Sigmoid colon (tissue), 7 donors: ENCODE measurements at regions of chr11 and their contacts with region 1.

Region 1: DNA sequence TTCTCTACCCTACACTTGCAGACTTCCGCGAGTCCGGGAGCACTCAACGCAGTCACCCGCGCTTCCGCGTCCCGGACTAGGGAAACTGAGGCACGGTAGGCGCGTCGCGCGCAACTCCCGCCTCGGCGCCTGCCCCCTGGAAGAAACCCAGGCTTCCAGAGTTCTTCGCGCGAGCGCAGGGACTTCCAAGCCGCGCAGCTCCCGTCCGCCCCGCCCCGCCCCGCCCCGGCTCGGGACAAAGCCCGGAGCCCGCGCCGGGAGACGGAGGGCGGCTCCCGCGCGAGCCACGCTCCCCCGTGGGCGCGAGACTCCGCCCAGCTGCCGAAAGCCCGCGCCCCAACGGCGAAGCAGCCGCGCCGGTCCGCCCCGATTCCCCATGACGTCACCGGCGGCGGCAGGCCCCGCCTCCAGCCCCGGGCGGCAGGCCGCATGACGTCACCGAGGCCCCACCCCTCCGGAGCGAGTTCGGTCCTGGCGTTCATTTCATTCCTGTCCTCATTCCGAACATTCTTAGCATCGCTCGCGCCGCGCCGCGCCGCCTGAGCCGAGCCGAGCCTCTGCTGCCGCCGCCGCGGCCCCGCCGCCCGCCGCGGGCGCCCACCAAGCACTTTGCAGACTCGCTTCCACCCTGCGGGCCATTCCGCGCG is at the start of gene TEAD1:
- DNase-seq: peak; percentile 98
- H3K4me3 ChIP-seq: peak within 1 kb of the TSS; percentile 62 to 92 (median 87)
- H3K27ac ChIP-seq: peak within 1 kb of the TSS; percentile 98 to 99 (median 99)
- H3K4me1 ChIP-seq: peaks cover 0 to 39% (median 15%) of the 10 kb centered on the region in 4 donors
- H3K27me3 ChIP-seq: no peaks in the 10 kb centered on the region
- CTCF ChIP-seq: no peak
- EP300 ChIP-seq: peak in 1 of 4 donors; percentile 61
- POLR2A ChIP-seq: peak; percentile 67 to 77
- total RNA-seq, gene TEAD1: 155 to 200 (median 186) TPM

Region 2: DNA sequence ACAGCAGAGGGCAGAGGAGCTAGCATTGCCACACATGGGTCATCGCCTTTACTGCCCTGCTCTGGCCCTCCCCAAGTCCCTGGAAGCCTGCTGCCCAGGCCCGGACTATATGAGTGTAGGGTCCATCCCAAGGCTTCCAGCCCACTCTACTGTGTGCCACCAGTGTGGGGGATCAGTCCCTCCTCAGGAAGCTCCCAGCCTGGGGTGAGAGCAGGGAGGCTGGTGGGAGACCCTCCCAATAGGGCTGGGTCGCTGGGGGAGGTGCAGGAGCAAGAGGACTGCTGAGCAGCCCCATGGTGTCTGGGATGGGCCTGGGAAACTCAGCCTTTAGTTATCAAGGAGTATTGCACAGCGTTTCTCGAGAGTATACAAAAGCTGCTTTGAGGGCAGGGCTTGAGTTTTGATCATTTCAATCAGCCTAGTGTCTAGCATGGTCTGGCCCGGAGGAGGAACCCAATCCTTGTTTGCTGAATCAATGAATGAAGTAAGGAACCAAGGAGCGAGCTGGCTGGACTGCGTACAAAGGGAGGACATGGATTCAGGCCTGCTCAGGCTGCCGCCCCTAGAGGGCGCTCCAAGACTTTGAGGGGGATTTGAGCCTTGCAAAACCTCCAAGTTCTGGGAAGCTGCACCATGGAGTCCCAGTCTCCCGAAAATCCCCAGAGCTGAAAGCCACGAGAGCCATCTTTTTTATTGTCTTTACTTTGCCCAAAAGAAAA is 385.7 kb before region 1 on chr11:
- intact Hi-C with region 1: loop called (anchors 2 kb)
- DNase-seq: peak; percentile 94
- H3K4me3 ChIP-seq: no peak overlapping the region
- H3K27ac ChIP-seq: peak overlapping the region; percentile 88 to 99 (median 92)
- H3K4me1 ChIP-seq: peaks cover 0 to 45% (median 39%) of the 10 kb centered on the region in 4 donors
- H3K27me3 ChIP-seq: no peaks in the 10 kb centered on the region
- CTCF ChIP-seq: peak; percentile 77 to 91 (median 84)
- EP300 ChIP-seq: no peak
- POLR2A ChIP-seq: no peak

Region 3: DNA sequence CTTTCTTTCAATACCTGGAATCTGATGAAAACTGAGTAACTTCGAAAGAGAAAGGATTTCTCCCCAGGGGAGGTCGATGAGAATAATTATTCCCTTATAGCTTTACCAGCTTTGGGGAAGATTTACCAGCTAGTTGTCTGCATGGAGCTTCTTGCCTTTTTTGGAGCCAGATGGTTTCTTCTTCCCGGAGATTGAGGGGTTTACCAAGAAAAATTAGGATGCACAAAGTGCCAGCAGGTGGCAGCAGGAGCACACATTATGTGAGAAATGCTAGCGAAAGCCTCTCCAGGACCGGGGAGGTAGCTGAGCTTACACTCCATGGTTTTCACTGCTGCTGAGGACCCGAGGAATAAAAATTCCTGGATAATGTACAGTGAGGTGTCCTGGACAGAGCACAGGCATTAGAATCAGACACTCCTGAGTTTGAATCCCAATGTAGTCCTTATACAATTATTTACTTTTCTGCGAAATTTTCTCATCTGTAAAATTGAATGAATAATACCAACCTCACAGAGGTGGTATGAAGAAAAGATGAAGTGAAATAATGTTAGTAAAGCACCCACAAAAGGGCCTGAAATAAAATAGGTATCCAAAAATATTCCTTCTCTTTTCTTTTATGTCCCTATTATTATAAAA is 342.7 kb before region 1 on chr11:
- intact Hi-C with region 1: loop called (anchors 2 kb)
- DNase-seq: peak; percentile 93
- H3K4me3 ChIP-seq: no peak overlapping the region
- H3K27ac ChIP-seq: peak overlapping the region; percentile 25 to 91 (median 84)
- H3K4me1 ChIP-seq: peaks cover 2 to 41% (median 34%) of the 10 kb centered on the region in 4 donors
- H3K27me3 ChIP-seq: no peaks in the 10 kb centered on the region
- CTCF ChIP-seq: peak; percentile 69 to 85 (median 76)
- EP300 ChIP-seq: no peak
- POLR2A ChIP-seq: no peak

Region 4: GRCh38 chr11:12411806-12412727 is 262.0 kb before region 1 on chr11:
- intact Hi-C with region 1: loop called (anchors 1 kb)
- DNase-seq: peak; percentile 95
- H3K4me3 ChIP-seq: no peak overlapping the region
- H3K27ac ChIP-seq: peak overlapping the region; percentile 97 to 99 (median 98)
- H3K4me1 ChIP-seq: peaks cover 0 to 100% (median 92%) of the 10 kb centered on the region in 4 donors
- H3K27me3 ChIP-seq: no peaks in the 10 kb centered on the region
- CTCF ChIP-seq: peak in 3 of 4 experiments; percentile 75 to 89 (median 82)
- EP300 ChIP-seq: peak; percentile 89 to 98 (median 92)
- POLR2A ChIP-seq: no peak

Region 5: DNA sequence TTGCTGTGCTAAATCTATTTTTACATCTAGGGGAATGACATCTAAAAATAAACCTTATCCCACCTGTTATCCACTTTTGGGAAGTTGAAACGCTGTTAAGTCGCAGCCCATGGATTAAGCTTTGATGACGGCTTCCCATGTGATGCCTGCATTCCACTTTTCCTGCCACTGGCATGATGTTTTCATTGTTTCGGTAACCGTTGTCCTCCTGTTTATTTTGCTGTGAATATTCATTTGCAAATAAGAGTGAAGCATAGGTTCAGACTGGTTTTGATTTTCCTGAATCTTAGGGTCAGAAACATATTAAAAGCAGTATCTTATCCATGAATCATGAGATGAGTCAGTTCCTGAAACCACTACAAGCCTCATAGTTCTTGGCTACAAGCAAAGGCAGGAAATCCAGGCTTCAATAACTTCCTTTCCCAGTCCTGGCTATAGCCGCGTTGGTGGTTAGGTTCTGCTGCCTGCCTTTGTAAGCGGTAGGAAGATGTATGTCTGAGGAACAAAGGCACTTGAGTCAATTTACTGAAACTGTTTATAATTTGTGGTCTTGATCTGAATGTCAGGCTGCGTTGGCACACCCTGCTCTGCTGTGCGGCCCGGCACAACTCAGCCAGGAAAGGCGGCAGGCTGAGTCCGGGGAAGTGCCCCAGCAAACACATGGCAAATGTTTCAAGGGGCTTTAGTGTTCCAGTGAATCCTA is 19.6 kb after region 1 on chr11:
- intact Hi-C with region 1: loop called (anchors 2 kb)
- DNase-seq: peak; percentile 84
- H3K4me3 ChIP-seq: peak overlapping the region in 3 of 4 donors; percentile 11 to 26 (median 19)
- H3K27ac ChIP-seq: peak overlapping the region; percentile 82 to 93 (median 91)
- H3K4me1 ChIP-seq: peaks cover 0 to 86% (median 83%) of the 10 kb centered on the region in 4 donors
- H3K27me3 ChIP-seq: no peaks in the 10 kb centered on the region
- CTCF ChIP-seq: no peak
- EP300 ChIP-seq: peak in 3 of 4 donors; percentile 9 to 25 (median 16)
- POLR2A ChIP-seq: no peak

Region 6: GRCh38 chr11:12784987-12785386 is 110.9 kb after region 1 on chr11:
- intact Hi-C with region 1: no loop called
- DNase-seq: no peak
- H3K4me3 ChIP-seq: no peak overlapping the region
- H3K27ac ChIP-seq: no peak overlapping the region
- H3K4me1 ChIP-seq: peaks cover 0 to 21% (median 10%) of the 10 kb centered on the region in 4 donors
- H3K27me3 ChIP-seq: no peaks in the 10 kb centered on the region
- CTCF ChIP-seq: no peak
- EP300 ChIP-seq: no peak
- POLR2A ChIP-seq: no peak

Region 7: DNA sequence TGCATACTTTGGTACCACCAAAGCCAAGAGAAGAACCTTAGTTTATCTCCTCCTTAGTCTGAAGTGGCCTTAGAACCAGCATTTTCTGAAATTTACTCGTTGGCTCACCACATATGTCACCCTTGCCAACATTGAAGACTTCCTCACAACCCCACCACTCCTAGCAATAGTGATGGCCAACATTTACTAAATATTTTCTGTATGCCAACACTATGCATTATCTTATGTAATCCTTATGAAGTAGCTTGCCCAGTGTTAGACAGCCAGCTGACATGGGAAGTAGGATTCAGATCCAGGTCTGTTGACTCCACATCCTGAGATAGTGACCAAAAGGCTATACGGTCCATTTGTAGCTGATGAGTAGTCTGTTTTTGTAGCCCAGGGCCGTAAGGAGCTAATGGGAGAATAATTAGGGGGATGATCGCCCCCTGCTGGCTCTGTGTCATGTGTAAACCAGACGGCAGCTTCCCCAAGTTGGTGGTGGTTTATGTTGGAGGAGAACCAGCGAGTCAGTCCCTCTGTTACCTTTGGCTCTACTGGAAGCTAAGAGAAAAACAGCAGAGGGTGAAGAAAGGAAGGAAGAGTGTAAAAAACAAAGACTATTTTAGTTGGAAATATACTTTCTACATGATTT is 214.6 kb after region 1 on chr11:
- intact Hi-C with region 1: loop called (anchors 1 kb)
- DNase-seq: peak; percentile 95
- H3K4me3 ChIP-seq: no peak overlapping the region
- H3K27ac ChIP-seq: peak overlapping the region; percentile 73 to 91 (median 84)
- H3K4me1 ChIP-seq: peaks cover 0 to 79% (median 66%) of the 10 kb centered on the region in 4 donors
- H3K27me3 ChIP-seq: no peaks in the 10 kb centered on the region
- CTCF ChIP-seq: peak; percentile 71 to 84 (median 78)
- EP300 ChIP-seq: peak in 1 of 4 donors; percentile 16
- POLR2A ChIP-seq: no peak